Panc1 (cell line): ENCODE measurements at regions of chr1 and their contacts with region 1.

Region 1: DNA sequence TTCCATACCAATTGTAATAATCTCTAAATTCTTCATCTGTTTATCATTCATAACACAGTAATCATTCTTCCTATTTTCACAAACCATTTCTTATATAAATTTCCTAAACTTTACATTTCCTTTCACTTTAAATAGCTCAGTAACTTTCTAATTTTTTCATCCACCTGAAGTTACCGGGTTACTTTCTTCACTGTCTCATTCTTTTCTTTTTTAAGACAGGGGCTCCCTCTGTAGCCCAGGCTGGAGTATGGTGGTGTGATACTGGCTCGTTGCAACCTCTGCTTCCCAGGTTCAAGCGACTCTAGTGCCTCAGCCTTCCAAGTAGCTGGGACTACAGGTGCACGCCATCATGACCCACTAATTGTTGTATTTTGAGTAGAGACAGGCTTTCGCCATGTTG is 41.3 kb downstream of the RERE start:
- DNase-seq: no peak
- ATAC-seq: no peak
- H3K4me3 ChIP-seq: no peak overlapping the region
- H3K27ac ChIP-seq: no peak overlapping the region
- H3K4me1 ChIP-seq: no peaks in the 10 kb centered on the region
- H3K27me3 ChIP-seq: no peaks in the 10 kb centered on the region
- CTCF ChIP-seq: no peak

Region 2: GRCh38 chr1:8742022-8742924 is 33.8 kb before region 1 on chr1:
- CTCF ChIA-PET with region 1: interaction called, 11 read pairs
- POLR2A ChIA-PET with region 1: interaction called, 3 read pairs
- in situ Hi-C with region 1: no loop called
- intact Hi-C with region 1: no loop called
- DNase-seq: no peak
- ATAC-seq: peak; percentile 75
- H3K4me3 ChIP-seq: no peak overlapping the region
- H3K27ac ChIP-seq: no peak overlapping the region
- H3K4me1 ChIP-seq: no peaks in the 10 kb centered on the region
- H3K27me3 ChIP-seq: no peaks in the 10 kb centered on the region
- CTCF ChIP-seq: no peak

Region 3: GRCh38 chr1:8817406-8818324 is 41.6 kb after region 1 on chr1 and contains the start of gene RERE:
- CTCF ChIA-PET with region 1: interaction called, 10 read pairs
- POLR2A ChIA-PET with region 1: no interaction called
- in situ Hi-C with region 1: no loop called
- intact Hi-C with region 1: no loop called
- DNase-seq: no peak
- ATAC-seq: peak; percentile 94
- H3K4me3 ChIP-seq: peak within 1 kb of the TSS; percentile 89 to 91
- H3K27ac ChIP-seq: peak within 1 kb of the TSS; percentile 95
- H3K4me1 ChIP-seq: peaks cover 50% of the 10 kb centered on the region
- H3K27me3 ChIP-seq: no peaks in the 10 kb centered on the region
- CTCF ChIP-seq: no peak
- total RNA-seq, gene RERE: 217 TPM